Caco-2 (cell line): ENCODE measurements at regions of chr7 and their contacts with region 1.

Region 1: GRCh38 chr7:111735661-111736551 is 173.6 kb upstream of the IMMP2L start:
- DNase-seq: peak; percentile 56 to 72
- H3K4me3 ChIP-seq: no peak overlapping the region
- H3K4me3 Mint-ChIP-seq: no peak overlapping the region
- H3K27ac Mint-ChIP-seq: no peak overlapping the region
- H3K4me1 ChIP-seq: no peaks in the 10 kb centered on the region
- H3K4me1 Mint-ChIP-seq: no peaks in the 10 kb centered on the region
- H3K27me3 ChIP-seq: no peaks in the 10 kb centered on the region
- H3K27me3 Mint-ChIP-seq: no peaks in the 10 kb centered on the region
- CTCF ChIP-seq: peak; percentile 78 to 83

Region 2: DNA sequence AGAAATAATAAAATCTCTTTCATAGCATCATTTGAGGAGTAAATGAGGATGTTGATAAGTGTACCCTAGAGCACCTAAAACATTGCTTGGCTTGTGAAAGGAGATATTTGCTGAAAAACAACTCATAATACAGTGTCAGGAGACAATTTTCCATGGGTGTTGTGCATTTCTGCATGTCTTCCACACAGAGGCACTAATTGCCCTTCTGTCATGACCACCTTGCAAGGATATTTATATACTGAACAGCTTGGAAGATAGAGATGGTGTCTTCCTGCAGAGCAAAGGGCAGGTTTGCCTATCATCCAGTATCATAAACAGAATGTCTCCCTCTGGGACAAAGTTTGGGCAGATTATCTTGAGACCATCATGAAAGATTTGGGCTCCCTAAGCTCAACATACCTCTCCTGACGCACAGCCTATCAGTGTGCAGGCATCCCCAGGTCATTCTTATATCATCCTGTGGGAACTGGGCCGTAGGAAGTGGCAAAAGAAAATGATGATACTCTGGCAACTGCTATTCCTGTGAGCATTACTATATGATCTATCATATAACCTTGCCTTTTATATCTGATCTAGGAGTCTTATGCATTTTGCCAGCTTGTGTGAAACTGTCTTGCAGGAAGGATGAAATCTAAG is 1140.1 kb before region 1 on chr7:
- CTCF ChIA-PET with region 1: no interaction called
- POLR2A ChIA-PET with region 1: no interaction called
- intact Hi-C with region 1: loop called (anchors 10 kb)
- DNase-seq: no peak
- H3K4me3 ChIP-seq: no peak overlapping the region
- H3K4me3 Mint-ChIP-seq: no peak overlapping the region
- H3K27ac Mint-ChIP-seq: no peak overlapping the region
- H3K4me1 ChIP-seq: no peaks in the 10 kb centered on the region
- H3K4me1 Mint-ChIP-seq: no peaks in the 10 kb centered on the region
- H3K27me3 ChIP-seq: no peaks in the 10 kb centered on the region
- H3K27me3 Mint-ChIP-seq: no peaks in the 10 kb centered on the region
- CTCF ChIP-seq: peak in 1 of 2 experiments; percentile 28

Region 3: DNA sequence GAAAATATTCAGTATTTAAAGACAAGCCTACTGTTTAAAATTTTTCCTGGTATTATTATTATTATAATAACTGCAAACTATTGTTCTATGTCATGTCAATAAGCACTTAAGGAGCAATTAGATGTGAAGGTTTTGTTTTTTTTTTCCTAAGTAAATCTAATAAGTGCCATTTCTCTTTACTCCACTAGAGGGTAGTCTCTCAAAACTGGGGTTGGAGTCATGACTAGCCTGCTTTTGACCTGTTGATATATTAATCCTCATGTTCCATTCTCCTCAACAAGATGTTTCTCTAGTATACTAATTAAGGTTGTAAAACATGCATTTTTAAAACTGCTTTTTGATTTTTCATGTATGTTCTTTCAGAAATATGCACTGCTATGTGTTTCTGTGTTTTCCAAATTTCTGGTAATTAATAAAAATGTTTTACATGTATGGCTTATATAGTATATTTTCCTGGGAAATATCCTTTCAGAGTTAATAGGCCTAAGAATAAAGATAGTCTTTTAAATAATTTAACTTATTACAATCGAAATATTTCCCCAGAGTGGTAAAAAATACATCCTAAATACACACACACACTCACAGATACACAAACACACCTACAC is 646.0 kb before region 1 on chr7:
- CTCF ChIA-PET with region 1: no interaction called
- POLR2A ChIA-PET with region 1: no interaction called
- intact Hi-C with region 1: loop called (anchors 1 kb)
- DNase-seq: peak in 1 of 2 experiments; percentile 26
- H3K4me3 ChIP-seq: no peak overlapping the region
- H3K4me3 Mint-ChIP-seq: no peak overlapping the region
- H3K27ac Mint-ChIP-seq: no peak overlapping the region
- H3K4me1 ChIP-seq: no peaks in the 10 kb centered on the region
- H3K4me1 Mint-ChIP-seq: no peaks in the 10 kb centered on the region
- H3K27me3 ChIP-seq: no peaks in the 10 kb centered on the region
- H3K27me3 Mint-ChIP-seq: no peaks in the 10 kb centered on the region
- CTCF ChIP-seq: peak; percentile 50 to 63

Region 4: DNA sequence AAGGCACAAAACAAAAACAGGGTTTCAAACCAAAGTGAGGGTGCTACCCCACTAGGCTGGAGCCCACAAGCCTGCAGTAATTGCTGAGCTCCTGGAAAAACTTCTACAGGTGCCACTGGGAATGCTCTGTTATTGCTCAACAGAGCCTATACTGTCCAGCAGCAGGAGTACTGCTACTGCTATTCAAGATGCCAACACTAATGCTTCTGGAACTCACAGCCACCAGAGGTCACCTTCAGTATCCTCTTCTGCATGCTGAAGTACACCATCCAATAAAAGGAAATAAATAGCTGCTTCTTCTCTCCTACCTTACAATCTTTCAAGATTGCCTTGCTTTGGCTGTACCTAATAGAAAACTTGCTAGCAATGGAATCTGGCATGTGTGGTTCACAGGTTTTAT is 422.9 kb before region 1 on chr7:
- CTCF ChIA-PET with region 1: no interaction called
- POLR2A ChIA-PET with region 1: no interaction called
- intact Hi-C with region 1: loop called (anchors 5 kb)
- DNase-seq: peak; percentile 18 to 34
- H3K4me3 ChIP-seq: no peak overlapping the region
- H3K4me3 Mint-ChIP-seq: no peak overlapping the region
- H3K27ac Mint-ChIP-seq: no peak overlapping the region
- H3K4me1 ChIP-seq: no peaks in the 10 kb centered on the region
- H3K4me1 Mint-ChIP-seq: no peaks in the 10 kb centered on the region
- H3K27me3 ChIP-seq: no peaks in the 10 kb centered on the region
- H3K27me3 Mint-ChIP-seq: no peaks in the 10 kb centered on the region
- CTCF ChIP-seq: peak in 1 of 2 experiments; percentile 4

Region 5: DNA sequence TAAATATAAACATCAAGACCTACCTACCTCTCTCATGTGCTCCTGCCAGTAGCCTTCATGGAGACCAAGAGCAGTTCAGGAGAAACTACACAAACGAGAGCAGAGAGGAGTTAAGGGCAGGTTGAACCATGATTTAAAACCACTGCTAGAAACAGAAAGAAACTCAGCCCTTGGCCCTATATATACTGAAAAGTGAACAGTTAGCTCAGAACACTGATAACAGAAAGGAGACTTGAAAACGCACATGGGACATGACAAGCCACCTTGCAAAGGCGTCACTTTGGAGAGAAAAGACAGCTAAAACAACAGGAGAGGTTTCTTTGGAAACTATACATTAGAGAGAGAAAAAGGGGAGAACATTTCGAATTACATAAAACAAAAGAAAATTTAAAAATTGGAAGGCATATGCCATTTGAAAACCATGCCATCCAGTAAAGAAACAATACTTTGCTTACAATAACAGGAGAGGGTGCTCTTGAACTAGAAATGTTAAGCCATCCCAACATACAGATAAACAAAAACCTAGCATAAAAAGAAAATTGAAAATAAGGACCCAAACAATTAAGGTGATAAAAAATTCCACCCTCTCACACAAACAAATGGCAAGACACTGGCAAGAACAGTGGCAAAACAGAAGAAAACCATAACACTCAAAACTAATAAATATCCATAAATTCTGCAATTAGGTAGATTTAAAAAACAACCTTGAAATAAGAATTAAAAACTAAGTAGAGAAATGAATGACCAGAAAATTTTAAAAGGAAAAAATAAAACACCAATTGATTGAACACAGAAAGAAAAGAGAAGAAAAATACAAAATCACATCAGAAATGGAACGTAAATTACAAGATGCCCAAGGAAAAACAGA is 406.3 kb before region 1 on chr7:
- CTCF ChIA-PET with region 1: no interaction called
- POLR2A ChIA-PET with region 1: no interaction called
- intact Hi-C with region 1: loop called (anchors 1 kb)
- DNase-seq: no peak
- H3K4me3 ChIP-seq: no peak overlapping the region
- H3K4me3 Mint-ChIP-seq: no peak overlapping the region
- H3K27ac Mint-ChIP-seq: no peak overlapping the region
- H3K4me1 ChIP-seq: no peaks in the 10 kb centered on the region
- H3K4me1 Mint-ChIP-seq: no peaks in the 10 kb centered on the region
- H3K27me3 ChIP-seq: no peaks in the 10 kb centered on the region
- H3K27me3 Mint-ChIP-seq: peaks cover 2% of the 10 kb centered on the region
- CTCF ChIP-seq: no peak

Region 6: GRCh38 chr7:111486472-111487142 is 249.3 kb before region 1 on chr7:
- CTCF ChIA-PET with region 1: no interaction called
- POLR2A ChIA-PET with region 1: no interaction called
- intact Hi-C with region 1: loop called (anchors 1 kb)
- DNase-seq: peak in 1 of 2 experiments; percentile 43
- H3K4me3 ChIP-seq: no peak overlapping the region
- H3K4me3 Mint-ChIP-seq: no peak overlapping the region
- H3K27ac Mint-ChIP-seq: no peak overlapping the region
- H3K4me1 ChIP-seq: no peaks in the 10 kb centered on the region
- H3K4me1 Mint-ChIP-seq: no peaks in the 10 kb centered on the region
- H3K27me3 ChIP-seq: no peaks in the 10 kb centered on the region
- H3K27me3 Mint-ChIP-seq: no peaks in the 10 kb centered on the region
- CTCF ChIP-seq: peak; percentile 61 to 66

Region 7: GRCh38 chr7:111650412-111650999 is 85.4 kb before region 1 on chr7:
- CTCF ChIA-PET with region 1: no interaction called
- POLR2A ChIA-PET with region 1: no interaction called
- intact Hi-C with region 1: loop called (anchors 2 kb)
- DNase-seq: peak in 1 of 2 experiments; percentile 13
- H3K4me3 ChIP-seq: no peak overlapping the region
- H3K4me3 Mint-ChIP-seq: no peak overlapping the region
- H3K27ac Mint-ChIP-seq: no peak overlapping the region
- H3K4me1 ChIP-seq: peaks cover 10% of the 10 kb centered on the region; the same call in 1 of the 2 replicates
- H3K4me1 Mint-ChIP-seq: no peaks in the 10 kb centered on the region
- H3K27me3 ChIP-seq: no peaks in the 10 kb centered on the region
- H3K27me3 Mint-ChIP-seq: no peaks in the 10 kb centered on the region
- CTCF ChIP-seq: no peak

Region 8: DNA sequence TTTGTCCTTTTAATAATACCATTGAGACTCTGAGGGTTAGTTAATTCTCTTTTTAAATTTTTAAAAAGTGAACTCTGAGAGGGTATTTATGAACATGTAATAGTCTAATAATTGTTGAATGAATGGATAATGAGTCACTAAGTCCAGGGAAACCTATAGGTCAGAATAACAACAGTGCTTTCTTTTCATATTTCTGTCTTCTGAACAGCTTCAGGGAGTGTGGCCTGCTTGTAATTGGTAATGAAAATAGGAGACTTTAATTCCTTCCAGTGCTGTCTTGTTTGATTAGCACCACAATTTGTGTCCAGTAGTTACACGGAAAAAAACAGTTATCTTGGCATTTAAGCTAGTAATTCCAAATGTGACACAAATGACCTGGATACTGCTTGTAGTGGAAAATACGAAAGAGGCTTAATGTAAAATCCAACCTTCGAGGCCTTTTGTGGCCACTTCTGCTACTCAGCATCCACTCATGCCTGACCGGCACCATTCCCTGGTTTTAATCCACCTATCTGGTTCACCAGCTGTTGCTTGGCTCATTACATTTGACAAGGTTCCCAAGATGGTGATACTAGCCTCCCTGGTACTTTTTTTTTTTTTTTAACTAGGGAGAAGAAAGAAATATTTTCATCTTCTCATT is 24.4 kb before region 1 on chr7:
- CTCF ChIA-PET with region 1: no interaction called
- POLR2A ChIA-PET with region 1: no interaction called
- intact Hi-C with region 1: no loop called
- DNase-seq: no peak
- H3K4me3 ChIP-seq: no peak overlapping the region
- H3K4me3 Mint-ChIP-seq: no peak overlapping the region
- H3K27ac Mint-ChIP-seq: no peak overlapping the region
- H3K4me1 ChIP-seq: peaks cover 2% of the 10 kb centered on the region; the same call in 1 of the 2 replicates
- H3K4me1 Mint-ChIP-seq: no peaks in the 10 kb centered on the region
- H3K27me3 ChIP-seq: no peaks in the 10 kb centered on the region
- H3K27me3 Mint-ChIP-seq: peaks cover 2% of the 10 kb centered on the region
- CTCF ChIP-seq: no peak